Naive thymus-derived CD4-positive, alpha-beta T cell (primary cell): ENCODE measurements at regions of chr17 and their contacts with region 1.

Region 1: GRCh38 chr17:78272181-78272913 is 40.9 kb downstream of the TMEM235 start:
- DNase-seq: peak in 8 of 9 donors; percentile 50 to 93 (median 86)
- ATAC-seq: peak; percentile 93
- H3K4me3 ChIP-seq: no peak overlapping the region
- H3K4me3 Mint-ChIP-seq: peak overlapping the region; percentile 33 to 80 (median 72)
- H3K27ac ChIP-seq: peak overlapping the region; percentile 71
- H3K27ac Mint-ChIP-seq: peak overlapping the region; percentile 66 to 99 (median 94)
- H3K4me1 ChIP-seq: peaks cover 0 to 37% of the 10 kb centered on the region in 2 donors
- H3K4me1 Mint-ChIP-seq: peaks cover 20 to 61% (median 44%) of the 10 kb centered on the region in 7 donors
- H3K27me3 ChIP-seq: no peaks in the 10 kb centered on the region
- H3K27me3 Mint-ChIP-seq: peaks cover 0 to 5% (median 0%) of the 10 kb centered on the region in 5 donors

Region 2: DNA sequence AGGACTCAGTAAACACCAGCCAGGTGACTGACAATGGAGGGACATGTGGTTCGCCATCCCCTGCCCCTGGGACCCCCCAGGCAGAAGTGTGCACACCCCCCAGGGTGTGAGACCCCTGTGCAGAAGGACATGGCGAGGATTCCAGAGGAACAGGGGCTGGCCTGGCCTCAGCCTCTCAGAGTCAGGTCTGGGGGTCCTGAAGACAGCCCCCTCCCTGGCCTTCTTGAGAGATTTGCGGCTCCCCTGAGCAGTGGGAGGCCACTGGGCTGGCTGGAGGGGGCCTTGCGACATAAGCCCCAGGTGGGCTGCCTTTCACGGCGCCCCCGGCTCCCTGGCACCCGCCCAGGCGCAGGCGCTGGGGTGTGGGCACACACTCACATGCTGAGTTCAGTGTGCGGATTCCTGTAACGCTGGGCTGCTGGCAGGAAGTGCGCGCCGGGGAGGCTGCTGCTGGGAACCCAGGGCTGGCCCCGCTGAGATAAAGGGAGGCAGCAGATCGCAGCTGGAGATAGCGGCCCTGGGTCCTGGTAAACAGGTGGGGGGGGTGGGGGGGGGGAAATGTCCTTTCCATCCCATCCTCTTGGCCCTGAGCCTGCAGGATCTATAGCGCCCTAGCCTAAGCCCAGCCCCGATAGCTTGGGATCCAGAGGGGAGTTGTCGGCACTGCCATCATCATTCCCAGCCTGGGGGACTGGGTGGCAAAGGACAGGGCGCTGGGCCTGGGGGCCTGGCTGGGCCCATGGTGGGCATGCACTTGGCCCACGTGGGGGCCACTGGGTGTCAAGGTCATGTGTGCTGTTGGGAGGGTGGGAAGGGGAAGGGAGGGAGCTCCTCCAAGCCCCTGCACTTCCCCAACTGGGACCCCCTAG is 13.8 kb before region 1 on chr17:
- CTCF ChIA-PET with region 1: interaction called, 4 read pairs
- POLR2A ChIA-PET with region 1: interaction called, 31 read pairs
- intact Hi-C with region 1: loop called (anchors 1 to 2 kb)
- DNase-seq: peak; percentile 56 to 90 (median 80)
- ATAC-seq: peak; percentile 74
- H3K4me3 ChIP-seq: peak overlapping the region; percentile 61
- H3K4me3 Mint-ChIP-seq: peak overlapping the region; percentile 82 to 88 (median 86)
- H3K27ac ChIP-seq: peak overlapping the region; percentile 93
- H3K27ac Mint-ChIP-seq: peak overlapping the region; percentile 86 to 99 (median 98)
- H3K4me1 ChIP-seq: peaks cover 16 to 82% of the 10 kb centered on the region in 2 donors
- H3K4me1 Mint-ChIP-seq: peaks cover 32 to 91% (median 78%) of the 10 kb centered on the region in 7 donors
- H3K27me3 ChIP-seq: no peaks in the 10 kb centered on the region
- H3K27me3 Mint-ChIP-seq: no peaks in the 10 kb centered on the region

Region 3: DNA sequence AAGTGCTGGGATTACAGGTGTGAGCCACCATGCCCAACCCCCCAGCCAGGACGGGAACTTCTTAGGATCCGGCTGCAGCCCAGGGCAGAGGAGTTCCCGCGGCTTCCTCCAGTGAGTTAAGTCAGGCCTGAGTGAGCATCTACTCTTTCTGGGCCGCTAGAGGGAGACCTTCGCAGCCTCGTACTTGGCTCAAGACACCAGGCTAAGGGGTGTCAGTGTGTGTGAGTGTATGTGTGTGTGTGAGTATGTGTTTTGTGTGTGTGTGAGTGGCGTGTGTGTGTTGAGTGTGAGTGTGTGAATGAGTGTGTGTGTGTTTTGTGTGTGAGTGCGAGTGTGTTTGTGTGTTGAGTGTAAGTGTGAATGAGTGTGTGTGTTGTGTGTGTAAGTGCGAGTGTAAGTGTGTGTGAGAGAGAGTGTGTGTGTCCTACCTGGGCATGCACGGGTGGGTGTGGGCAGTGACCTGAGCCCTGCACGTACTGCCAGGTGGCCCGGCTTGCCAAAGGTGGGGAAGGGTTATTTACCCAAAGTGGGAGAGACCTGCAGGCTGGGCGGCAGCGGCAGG is 17.5 kb after region 1 on chr17:
- CTCF ChIA-PET with region 1: interaction called, 8 read pairs
- POLR2A ChIA-PET with region 1: interaction called, 4 read pairs
- intact Hi-C with region 1: loop called in 1 of 2 experiments (anchors 1 kb)
- DNase-seq: peak; percentile 41 to 82 (median 71)
- ATAC-seq: peak; percentile 97
- H3K4me3 ChIP-seq: no peak overlapping the region
- H3K4me3 Mint-ChIP-seq: no peak overlapping the region
- H3K27ac ChIP-seq: no peak overlapping the region
- H3K27ac Mint-ChIP-seq: no peak overlapping the region
- H3K4me1 ChIP-seq: peaks cover 4 to 8% of the 10 kb centered on the region in 2 donors
- H3K4me1 Mint-ChIP-seq: peaks cover 0 to 10% (median 5%) of the 10 kb centered on the region in 7 donors
- H3K27me3 ChIP-seq: no peaks in the 10 kb centered on the region
- H3K27me3 Mint-ChIP-seq: no peaks in the 10 kb centered on the region

Region 4: GRCh38 chr17:79777894-79778503 is 1505.7 kb after region 1 on chr17 and contains the start of gene CBX2:
- CTCF ChIA-PET with region 1: no interaction called
- POLR2A ChIA-PET with region 1: no interaction called
- intact Hi-C with region 1: no loop called
- DNase-seq: peak; percentile 58 to 92 (median 77)
- ATAC-seq: peak; percentile 95
- H3K4me3 ChIP-seq: peak within 1 kb of the TSS; percentile 28
- H3K4me3 Mint-ChIP-seq: peak within 1 kb of the TSS; percentile 80 to 92 (median 86)
- H3K27ac ChIP-seq: no peak within 1 kb of the TSS
- H3K27ac Mint-ChIP-seq: peak within 1 kb of the TSS in 8 of 9 donors; percentile 32 to 89 (median 72)
- H3K4me1 ChIP-seq: peaks cover 7 to 10% of the 10 kb centered on the region in 2 donors
- H3K4me1 Mint-ChIP-seq: peaks cover 10 to 37% (median 24%) of the 10 kb centered on the region in 7 donors
- H3K27me3 ChIP-seq: peaks cover 11 to 26% of the 10 kb centered on the region in 2 donors
- H3K27me3 Mint-ChIP-seq: peaks cover 72 to 84% (median 77%) of the 10 kb centered on the region in 5 donors
- total RNA-seq, gene CBX2: 0.24 to 4.4 (median 0.41) TPM